ENCODE measurements at regions of chr17 and their contacts with region 1.

Region 1: DNA sequence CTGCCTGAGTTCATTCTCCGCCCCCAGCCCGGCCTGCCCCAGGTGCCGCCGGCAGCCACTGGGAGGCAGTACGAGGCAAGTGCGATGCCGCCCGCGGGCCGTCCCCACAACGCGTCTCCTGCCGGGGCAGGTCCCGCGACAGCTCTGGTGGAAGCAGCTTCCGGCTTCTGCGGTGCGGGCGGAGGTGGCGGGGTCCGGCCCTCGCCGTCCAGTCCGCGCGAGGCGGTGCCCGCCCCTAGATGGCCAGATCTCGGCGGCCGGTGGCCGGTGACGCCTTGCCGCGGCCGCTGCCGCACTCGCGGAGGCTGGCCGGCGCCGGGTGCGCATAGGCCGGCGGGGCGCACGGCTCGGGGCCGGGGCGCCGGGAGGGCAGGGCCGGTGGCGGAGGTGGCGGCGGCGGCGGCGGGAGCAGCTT is 1.8 kb downstream of the GJD3 start:
- DNase-seq: peak; percentile 89
- H3K4me3 ChIP-seq: peak overlapping the region; percentile 76
- H3K27ac ChIP-seq: no peak overlapping the region
- H3K4me1 ChIP-seq: no peaks in the 10 kb centered on the region; the same call in 1 of the 2 replicates
- H3K27me3 ChIP-seq: no peaks in the 10 kb centered on the region

Region 2: GRCh38 chr17:40303009-40303657 is 59.6 kb before region 1 on chr17:
- in situ Hi-C with region 1: loop called (anchors 10 kb)
- DNase-seq: peak; percentile 81
- H3K4me3 ChIP-seq: peak overlapping the region; percentile 30
- H3K27ac ChIP-seq: peak overlapping the region; percentile 97
- H3K4me1 ChIP-seq: peaks cover 54% of the 10 kb centered on the region
- H3K27me3 ChIP-seq: no peaks in the 10 kb centered on the region

Region 3: GRCh38 chr17:40536295-40537171 is 173.8 kb after region 1 on chr17:
- in situ Hi-C with region 1: loop called (anchors 10 kb)
- DNase-seq: peak; percentile 76
- H3K4me3 ChIP-seq: 0 out of 2 replicates have a peak overlapping the region, but pooled peaks have one; percentile 26
- H3K27ac ChIP-seq: peak overlapping the region; percentile 59
- H3K4me1 ChIP-seq: peaks cover 56% of the 10 kb centered on the region
- H3K27me3 ChIP-seq: no peaks in the 10 kb centered on the region

Region 4: GRCh38 chr17:40791787-40792436 is 429.2 kb after region 1 on chr17:
- in situ Hi-C with region 1: loop called (anchors 25 kb)
- DNase-seq: peak; percentile 73
- H3K4me3 ChIP-seq: no peak overlapping the region
- H3K27ac ChIP-seq: no peak overlapping the region
- H3K4me1 ChIP-seq: no peaks in the 10 kb centered on the region
- H3K27me3 ChIP-seq: peaks cover 22% of the 10 kb centered on the region

Measured in GM23248 (cell line).